A549 (cell line): ENCODE measurements at regions of chr10 and their contacts with region 1.

Region 1: GRCh38 chr10:122374237-122374869 is at the start of gene PLEKHA1:
- DNase-seq: peak; percentile 90 to 94
- ATAC-seq: peak; percentile 95 to 96
- H3K4me3 ChIP-seq: peak within 1 kb of the TSS; percentile 74
- H3K27ac ChIP-seq: peak within 1 kb of the TSS; percentile 89 to 97
- H3K4me1 ChIP-seq: peaks cover 34% of the 10 kb centered on the region
- CTCF ChIP-seq: no peak
- EP300 ChIP-seq: no peak
- POLR2A ChIP-seq: peak; percentile 82
- RAD21 ChIP-seq: no peak
- polyA plus RNA-seq, gene PLEKHA1: 52.0 and 62.4 TPM in 2 replicates

Region 2: GRCh38 chr10:122323941-122324675 is 50.2 kb before region 1 on chr10:
- CTCF ChIA-PET with region 1: no interaction called
- POLR2A ChIA-PET with region 1: interaction called, 10 read pairs
- DNase-seq: peak in 1 of 2 experiments; percentile 54
- ATAC-seq: peak; percentile 82 to 84; a peak in 5 of 6 replicates
- H3K4me3 ChIP-seq: no peak overlapping the region
- H3K27ac ChIP-seq: peak overlapping the region; percentile 52 to 54; a peak in 5 of 6 replicates
- H3K4me1 ChIP-seq: peaks cover 15% of the 10 kb centered on the region
- CTCF ChIP-seq: no peak
- EP300 ChIP-seq: no peak
- POLR2A ChIP-seq: no peak
- RAD21 ChIP-seq: no peak

Region 3: DNA sequence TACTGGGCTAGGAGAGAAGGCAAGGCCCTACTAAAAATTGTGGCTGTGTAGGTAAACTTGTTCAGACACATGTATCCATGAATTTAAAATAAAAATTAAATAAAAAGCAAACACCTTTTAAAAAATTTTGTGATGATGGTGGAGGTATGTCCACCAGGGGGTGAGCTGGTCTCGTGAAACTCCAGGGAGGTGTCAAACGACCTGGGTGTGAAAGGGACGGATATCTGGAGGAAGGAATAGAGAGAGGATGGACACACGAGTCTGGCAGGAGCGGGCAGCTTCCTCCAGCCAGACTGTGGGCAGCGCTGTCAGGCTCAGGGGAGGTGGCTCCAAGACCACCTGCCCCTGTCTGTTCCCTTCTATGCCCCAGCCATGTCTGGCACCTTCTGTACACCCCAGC is 151.4 kb after region 1 on chr10:
- CTCF ChIA-PET with region 1: no interaction called
- POLR2A ChIA-PET with region 1: no interaction called
- DNase-seq: peak in 1 of 2 experiments; percentile 17
- ATAC-seq: peak; percentile 42 to 74; a peak in 4 of 6 replicates
- H3K4me3 ChIP-seq: no peak overlapping the region
- H3K27ac ChIP-seq: no peak overlapping the region
- H3K4me1 ChIP-seq: no peaks in the 10 kb centered on the region
- CTCF ChIP-seq: peak; percentile 24; the same call in 1 of the 3 replicates
- EP300 ChIP-seq: no peak
- POLR2A ChIP-seq: no peak
- RAD21 ChIP-seq: peak; percentile 39 to 51; a peak in 3 of 5 replicates